SK-N-SH (cell line): ENCODE measurements at regions of chrX and their contacts with region 1.

Region 1: DNA sequence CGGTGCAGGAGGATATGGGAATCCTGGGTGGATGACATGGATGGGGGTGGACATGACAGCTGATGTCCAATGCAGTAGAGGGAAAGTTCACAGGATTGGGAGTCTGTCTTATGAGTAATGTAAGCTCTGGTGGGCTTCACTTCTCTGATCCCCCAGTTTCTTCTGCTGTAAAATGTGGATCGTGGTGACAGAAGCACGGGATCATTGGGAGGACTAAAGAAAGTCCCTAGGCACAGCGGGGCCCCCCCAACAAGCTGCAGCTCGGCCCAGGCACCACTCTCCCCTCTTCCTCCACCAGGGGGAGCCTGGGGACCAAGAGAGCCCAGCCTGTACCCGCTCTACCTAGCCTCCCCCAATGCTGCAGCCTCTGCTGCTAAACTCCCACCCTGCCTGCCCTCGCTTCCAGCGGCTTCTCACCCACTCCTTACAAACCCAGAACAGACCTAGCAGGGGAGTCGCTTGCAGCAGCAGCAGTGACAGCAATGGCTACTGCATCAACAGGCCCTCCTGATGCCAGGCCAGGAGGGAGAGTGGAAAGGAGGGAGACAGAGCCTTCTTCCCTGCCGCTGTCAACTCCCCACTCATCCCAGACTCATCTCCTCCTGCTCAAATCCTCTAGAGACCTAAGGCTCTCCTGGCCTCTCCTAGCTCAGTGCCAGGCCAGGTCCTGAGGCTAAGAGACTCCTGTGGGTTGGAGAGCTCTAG is 36.1 kb upstream of the IQSEC2 start:
- DNase-seq: peak; percentile 87
- H3K4me3 ChIP-seq: no peak overlapping the region; a peak in 1 of 4 replicates
- H3K27ac ChIP-seq: no peak overlapping the region
- H3K4me1 ChIP-seq: peaks cover 0 to 18% of the 10 kb centered on the region in 2 experiments; a peak in 1 of 4 replicates
- H3K27me3 ChIP-seq: peaks cover 35% of the 10 kb centered on the region
- CTCF ChIP-seq: peak; percentile 90
- EP300 ChIP-seq: no peak
- RAD21 ChIP-seq: peak; percentile 81

Region 2: DNA sequence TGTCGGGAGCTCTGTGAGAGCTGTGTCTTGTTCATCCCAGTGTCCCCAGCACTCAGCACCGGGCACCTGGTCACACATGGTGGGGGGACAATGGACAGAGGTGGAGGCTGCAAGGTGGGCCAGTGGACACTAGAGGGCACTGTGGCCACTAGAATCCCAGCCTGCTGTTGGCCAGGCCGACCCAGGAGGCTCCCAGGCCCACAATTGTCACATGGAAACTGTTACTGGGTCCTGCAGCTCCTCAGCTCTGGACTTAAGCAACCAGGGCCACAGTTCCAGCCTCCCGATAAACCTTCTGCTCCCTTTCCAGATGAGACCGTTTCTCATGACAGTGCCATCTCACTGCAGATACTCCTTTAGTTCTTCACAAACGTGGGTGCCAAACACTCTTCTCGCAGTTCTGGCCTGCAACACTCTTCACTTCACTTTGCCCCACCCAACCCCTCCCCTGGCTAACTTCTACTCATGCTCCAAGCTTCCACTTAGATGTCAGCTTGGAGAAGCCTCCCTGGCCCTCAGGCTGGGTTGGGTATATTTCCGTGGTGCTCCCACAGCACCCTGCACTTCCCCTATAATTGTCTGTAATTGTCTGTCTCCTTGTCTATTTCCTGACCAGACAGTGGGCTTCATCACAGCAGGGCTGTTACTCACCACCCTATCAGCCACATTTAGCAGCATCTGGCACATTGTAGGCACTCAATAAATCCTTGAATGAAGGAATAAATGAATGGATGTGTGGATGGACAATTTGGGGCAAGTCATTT is 32.7 kb before region 1 on chrX:
- CTCF ChIA-PET with region 1: interaction called, 60 read pairs
- POLR2A ChIA-PET with region 1: interaction called, 3 read pairs
- DNase-seq: peak; percentile 83
- H3K4me3 ChIP-seq: no peak overlapping the region; a peak in 1 of 4 replicates
- H3K27ac ChIP-seq: peak overlapping the region in 1 of 2 experiments; percentile 41; a peak in 2 of 4 replicates
- H3K4me1 ChIP-seq: peaks cover 34 to 66% of the 10 kb centered on the region in 2 experiments
- H3K27me3 ChIP-seq: no peaks in the 10 kb centered on the region
- CTCF ChIP-seq: peak; percentile 90
- EP300 ChIP-seq: no peak
- RAD21 ChIP-seq: peak; percentile 80

Region 3: DNA sequence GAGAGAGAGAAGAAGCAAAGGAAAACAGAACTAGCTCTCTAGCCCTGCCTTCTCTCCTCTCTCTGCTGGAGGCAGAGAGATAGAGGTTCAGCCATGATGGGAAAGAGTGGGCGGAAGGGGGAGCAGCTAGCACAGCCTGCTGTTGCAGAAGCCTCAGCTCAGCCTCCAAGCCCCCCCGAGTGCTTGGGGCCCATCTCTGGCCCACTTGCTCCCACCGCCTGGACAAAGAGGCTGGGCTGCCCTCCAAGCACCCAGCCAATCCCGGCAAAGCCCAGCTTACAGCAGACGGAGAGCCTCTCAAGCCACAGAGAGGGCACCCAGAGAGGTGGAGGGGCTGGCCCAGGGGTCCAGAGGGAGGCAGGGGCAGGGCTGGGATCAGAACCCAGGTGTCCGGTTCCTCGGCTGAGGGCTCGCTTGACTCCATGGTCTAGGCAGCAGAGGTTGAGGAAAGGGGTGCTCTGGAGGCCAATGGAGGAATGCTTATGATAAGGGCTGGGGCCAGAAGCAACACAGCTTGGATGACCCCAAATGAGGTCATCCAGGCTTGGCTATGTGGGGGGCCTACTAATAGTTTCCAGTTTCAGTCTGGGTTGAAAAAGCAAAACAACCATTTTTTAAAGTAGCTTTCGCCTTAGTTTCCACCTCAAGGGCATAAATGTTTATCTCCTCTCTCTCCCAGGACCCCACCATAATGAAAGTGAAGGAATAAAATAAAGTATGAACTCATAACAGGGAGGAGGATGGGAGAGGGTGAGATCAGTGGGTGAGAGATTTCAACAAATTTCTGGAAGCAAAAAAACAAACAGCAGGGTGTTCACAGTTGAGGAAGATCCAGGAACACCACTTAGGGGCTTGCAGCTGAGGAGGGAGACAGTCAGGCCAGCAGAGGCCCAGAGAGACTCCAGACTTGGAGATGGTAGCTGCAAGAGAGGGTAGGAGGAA is 11.2 kb before region 1 on chrX:
- CTCF ChIA-PET with region 1: interaction called, 53 read pairs
- POLR2A ChIA-PET with region 1: no interaction called
- DNase-seq: no peak
- H3K4me3 ChIP-seq: no peak overlapping the region
- H3K27ac ChIP-seq: no peak overlapping the region
- H3K4me1 ChIP-seq: no peaks in the 10 kb centered on the region
- H3K27me3 ChIP-seq: peaks cover 6% of the 10 kb centered on the region
- CTCF ChIP-seq: no peak
- EP300 ChIP-seq: no peak
- RAD21 ChIP-seq: no peak

Region 4: GRCh38 chrX:53422086-53422860 is 104.8 kb after region 1 on chrX and contains the start of gene SMC1A:
- CTCF ChIA-PET with region 1: interaction called, 30 read pairs
- POLR2A ChIA-PET with region 1: interaction called, 5 read pairs
- DNase-seq: peak; percentile 96
- H3K4me3 ChIP-seq: peak within 1 kb of the TSS; percentile 70 to 85
- H3K27ac ChIP-seq: peak within 1 kb of the TSS; percentile 83 to 87
- H3K4me1 ChIP-seq: peaks cover 5 to 14% of the 10 kb centered on the region in 2 experiments; a peak in 2 of 4 replicates
- H3K27me3 ChIP-seq: no peaks in the 10 kb centered on the region
- CTCF ChIP-seq: no peak
- EP300 ChIP-seq: peak; percentile 33 to 58; a peak in 3 of 4 replicates
- RAD21 ChIP-seq: no peak
- polyA plus RNA-seq, gene SMC1A: 34.6 and 34.9 TPM in 2 replicates

Region 5: GRCh38 chrX:53445977-53446376 is 128.5 kb after region 1 on chrX:
- CTCF ChIA-PET with region 1: interaction called, 16 read pairs
- POLR2A ChIA-PET with region 1: no interaction called
- DNase-seq: peak; percentile 40
- H3K4me3 ChIP-seq: no peak overlapping the region; a peak in 1 of 4 replicates
- H3K27ac ChIP-seq: no peak overlapping the region
- H3K4me1 ChIP-seq: peaks cover 0 to 9% of the 10 kb centered on the region in 2 experiments; a peak in 1 of 4 replicates
- H3K27me3 ChIP-seq: no peaks in the 10 kb centered on the region; the same call in 1 of the 2 replicates
- CTCF ChIP-seq: peak; percentile 70
- EP300 ChIP-seq: no peak
- RAD21 ChIP-seq: peak; percentile 58